Ovary (tissue), 10 donors: ENCODE measurements at regions of chr15 and their contacts with region 1.

Region 1: DNA sequence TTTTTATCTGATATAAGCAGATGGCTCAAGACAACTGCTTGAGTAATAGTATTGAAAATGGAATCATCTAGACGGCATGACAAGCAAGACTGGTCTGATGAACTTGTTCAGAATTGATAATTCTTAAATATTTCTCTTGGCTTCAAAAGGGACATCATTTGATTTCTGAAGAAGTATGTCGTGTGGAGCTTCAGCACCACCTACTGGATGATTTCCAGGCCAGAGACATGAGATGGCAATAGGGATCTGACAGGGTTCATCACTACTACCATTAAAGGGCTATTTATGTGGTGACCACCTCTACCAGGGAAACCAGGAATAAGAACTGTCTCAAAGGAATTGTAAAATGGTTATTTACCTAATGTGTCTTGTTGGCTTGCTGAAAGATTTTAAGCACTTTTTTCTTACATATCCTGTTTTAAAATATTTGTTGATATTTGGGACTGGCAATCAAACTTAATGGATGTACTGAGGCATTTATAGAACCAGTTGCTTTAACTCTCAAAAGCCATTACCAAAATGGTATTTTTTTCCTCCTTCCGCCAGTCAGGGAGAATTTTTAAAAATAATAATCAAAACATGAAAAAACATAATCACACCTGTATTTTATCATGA is 99.5 kb upstream of the FAM98B start:
- DNase-seq: peak; percentile 30 to 66 (median 46)
- H3K4me3 ChIP-seq: no peak overlapping the region
- H3K27ac ChIP-seq: no peak overlapping the region
- H3K4me1 ChIP-seq: no peaks in the 10 kb centered on the region
- H3K27me3 ChIP-seq: no peaks in the 10 kb centered on the region
- CTCF ChIP-seq: peak; percentile 30 to 66 (median 50)
- EP300 ChIP-seq: no peak
- POLR2A ChIP-seq: no peak

Region 2: GRCh38 chr15:38002883-38003477 is 351.4 kb before region 1 on chr15:
- intact Hi-C with region 1: loop called (anchors 5 to 10 kb)
- DNase-seq: no peak
- H3K4me3 ChIP-seq: no peak overlapping the region
- H3K27ac ChIP-seq: no peak overlapping the region
- H3K4me1 ChIP-seq: no peaks in the 10 kb centered on the region
- H3K27me3 ChIP-seq: no peaks in the 10 kb centered on the region
- CTCF ChIP-seq: peak in 1 of 3 donors; percentile 19
- EP300 ChIP-seq: no peak
- POLR2A ChIP-seq: no peak

Region 3: DNA sequence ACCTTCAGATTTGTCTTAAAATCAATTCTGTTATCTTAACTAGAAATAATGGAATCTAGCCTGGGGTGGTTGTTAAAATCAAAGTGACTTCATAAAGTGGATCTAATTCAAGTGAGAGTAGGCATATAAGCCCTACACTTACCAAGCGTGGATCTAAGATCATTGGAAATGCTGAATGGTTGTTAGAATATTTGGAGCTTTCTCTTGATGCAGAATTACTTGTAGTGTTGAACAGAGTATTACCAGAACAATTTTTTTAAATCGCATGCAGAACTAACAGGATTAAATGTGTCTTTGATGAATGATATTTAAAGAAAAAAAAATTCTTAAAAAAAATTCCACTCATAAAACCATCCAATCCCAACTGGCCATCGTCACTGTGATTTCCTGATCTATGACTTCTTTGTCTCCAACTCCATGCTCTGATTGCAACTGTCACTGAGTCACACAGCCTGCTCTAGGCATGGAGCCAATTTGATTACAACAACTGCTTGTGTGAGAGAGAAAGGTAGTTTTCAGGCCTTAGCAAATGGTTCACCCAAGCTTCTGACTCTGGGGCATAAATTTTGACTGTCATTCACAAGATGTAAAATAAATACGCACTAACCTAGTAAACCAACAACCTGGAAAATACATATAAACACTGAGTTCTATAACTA is 127.7 kb before region 1 on chr15:
- intact Hi-C with region 1: no loop called
- DNase-seq: no peak
- H3K4me3 ChIP-seq: no peak overlapping the region
- H3K27ac ChIP-seq: no peak overlapping the region
- H3K4me1 ChIP-seq: no peaks in the 10 kb centered on the region
- H3K27me3 ChIP-seq: no peaks in the 10 kb centered on the region
- CTCF ChIP-seq: no peak
- EP300 ChIP-seq: no peak
- POLR2A ChIP-seq: no peak

Region 4: DNA sequence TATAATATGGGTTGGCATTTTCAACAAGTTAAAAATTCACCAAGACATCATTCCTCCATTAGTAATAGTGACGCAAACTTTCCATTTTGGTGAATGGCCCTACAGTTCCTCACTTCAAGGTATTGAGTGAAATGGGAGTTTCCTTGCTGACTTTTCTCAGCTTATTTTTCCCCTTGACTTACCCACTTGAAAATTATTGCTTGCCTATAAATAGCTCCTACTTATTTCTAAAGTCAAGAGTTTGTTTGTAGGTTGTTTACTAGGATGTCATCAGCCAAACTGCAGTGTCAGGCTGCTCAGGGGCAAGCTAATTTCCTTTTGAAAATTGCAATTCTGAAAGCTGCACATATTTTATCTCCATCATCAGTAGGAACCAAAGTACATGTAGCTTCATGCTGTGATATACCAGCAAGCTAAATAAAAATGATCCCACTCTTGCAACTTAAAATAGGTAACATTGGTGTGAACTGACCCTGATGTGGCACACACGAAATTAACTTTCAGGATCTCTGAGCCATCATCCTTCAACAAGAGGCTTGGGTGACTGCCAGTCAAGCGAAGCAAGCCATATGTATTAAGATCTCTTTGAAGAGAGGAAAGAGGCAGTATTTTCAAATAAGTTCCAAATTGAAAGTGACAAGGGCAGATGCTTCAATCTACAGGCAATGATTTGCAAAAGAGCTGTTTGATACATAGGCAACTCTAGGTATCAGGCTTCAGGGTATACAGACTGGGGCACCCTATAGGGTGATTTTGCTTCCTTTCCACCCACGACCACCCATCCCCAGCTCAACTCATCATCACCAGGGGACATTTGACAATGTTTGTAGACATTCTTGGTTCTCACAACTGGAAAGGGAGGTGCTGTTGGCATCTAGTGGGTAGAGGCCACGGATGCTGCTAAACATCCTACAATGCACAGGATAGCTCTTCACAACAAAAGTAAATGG is 277.0 kb after region 1 on chr15:
- intact Hi-C with region 1: no loop called
- DNase-seq: no peak
- H3K4me3 ChIP-seq: no peak overlapping the region
- H3K27ac ChIP-seq: no peak overlapping the region
- H3K4me1 ChIP-seq: no peaks in the 10 kb centered on the region
- H3K27me3 ChIP-seq: no peaks in the 10 kb centered on the region
- CTCF ChIP-seq: no peak
- EP300 ChIP-seq: no peak
- POLR2A ChIP-seq: no peak